Testis (tissue), 5 donors: ENCODE measurements at regions of chr4 and their contacts with region 1.

Region 1: GRCh38 chr4:174631901-174632758 is 109.8 kb upstream of the HPGD start:
- DNase-seq: no peak
- H3K4me3 ChIP-seq: no peak overlapping the region
- H3K27ac ChIP-seq: no peak overlapping the region
- H3K4me1 ChIP-seq: no peaks in the 10 kb centered on the region
- H3K27me3 ChIP-seq: no peaks in the 10 kb centered on the region
- CTCF ChIP-seq: peak; percentile 33 to 61 (median 36)
- POLR2A ChIP-seq: no peak

Region 2: DNA sequence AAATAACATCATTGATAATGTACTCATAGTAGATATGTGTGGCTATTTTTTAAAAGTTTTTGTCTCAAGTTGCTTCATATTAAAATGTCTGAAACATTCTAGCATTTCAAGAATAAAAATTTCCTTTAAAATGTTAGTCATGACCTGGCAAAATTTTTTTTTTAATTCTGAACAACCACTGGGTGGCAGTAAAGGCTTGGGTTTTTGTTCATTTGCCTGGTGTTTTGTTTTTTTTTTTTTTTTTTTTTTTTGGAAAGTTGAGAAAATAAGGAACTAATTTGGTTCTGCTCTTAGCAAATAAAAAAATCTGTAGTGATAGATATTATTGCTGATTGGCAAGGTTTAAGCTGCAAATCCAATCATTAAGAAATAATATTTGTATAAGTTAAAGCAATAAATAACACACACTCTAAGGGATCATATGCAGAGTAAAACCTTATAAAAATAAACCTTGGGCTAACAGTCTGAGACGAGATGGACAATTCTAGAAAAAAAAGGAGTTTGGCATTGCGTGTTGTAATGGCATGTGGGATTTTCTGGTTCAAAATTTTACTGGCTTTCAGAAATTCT is 267.0 kb before region 1 on chr4:
- intact Hi-C with region 1: loop called (anchors 10 kb)
- DNase-seq: no peak
- H3K4me3 ChIP-seq: no peak overlapping the region
- H3K27ac ChIP-seq: no peak overlapping the region
- H3K4me1 ChIP-seq: no peaks in the 10 kb centered on the region
- H3K27me3 ChIP-seq: no peaks in the 10 kb centered on the region
- CTCF ChIP-seq: peak in 1 of 3 experiments; percentile 11
- POLR2A ChIP-seq: no peak